Ovary (tissue), 10 donors: ENCODE measurements at regions of chr1 and their contacts with region 1.

Region 1: DNA sequence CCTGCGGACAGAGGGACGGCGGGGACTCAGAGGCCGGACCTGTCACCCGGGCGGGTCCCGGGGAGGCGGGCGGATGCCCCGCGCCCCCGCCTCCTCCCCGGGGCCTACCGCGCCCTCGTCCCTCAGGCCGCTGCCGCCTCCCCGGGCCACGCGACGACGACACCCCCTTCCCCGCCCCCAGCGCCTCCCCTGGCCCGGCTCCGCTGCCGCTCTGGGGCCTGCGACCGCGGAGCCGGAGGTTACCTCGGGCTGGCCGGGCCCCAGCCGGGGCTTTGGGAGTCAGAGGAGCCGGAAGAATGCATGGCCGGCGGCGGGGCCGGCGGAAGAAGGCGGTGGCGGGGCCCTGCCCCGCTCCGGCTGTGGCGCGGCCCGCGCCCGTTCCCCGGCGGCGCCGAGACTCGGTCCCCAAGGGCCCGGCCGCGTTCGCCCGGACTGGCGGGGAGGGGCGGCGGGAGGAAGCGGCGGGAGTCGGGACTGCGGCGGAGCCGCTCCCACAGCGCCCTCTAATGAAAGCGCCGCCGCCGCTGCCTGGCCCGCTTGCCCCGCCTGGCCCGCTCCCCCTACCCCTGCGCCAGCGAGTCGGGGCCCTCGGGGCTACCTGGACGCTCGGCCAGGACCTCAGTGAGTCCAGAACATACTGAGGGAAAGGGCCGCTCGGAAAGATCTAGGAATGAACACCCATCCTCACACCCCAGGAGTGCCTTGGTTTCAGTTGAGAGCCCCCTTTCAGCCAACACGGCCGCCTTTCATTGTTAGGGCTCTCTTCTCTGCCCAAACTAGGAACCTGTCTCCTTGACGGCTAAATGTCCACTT is at the start of gene LPGAT1:
- DNase-seq: peak; percentile 71 to 85 (median 80)
- H3K4me3 ChIP-seq: peak within 1 kb of the TSS; percentile 77
- H3K27ac ChIP-seq: peak within 1 kb of the TSS; percentile 81 to 94
- H3K4me1 ChIP-seq: peaks cover 3% of the 10 kb centered on the region
- H3K27me3 ChIP-seq: no peaks in the 10 kb centered on the region
- CTCF ChIP-seq: peak; percentile 57 to 66 (median 65)
- EP300 ChIP-seq: no peak
- POLR2A ChIP-seq: no peak
- total RNA-seq, gene LPGAT1: 19.8 to 32.7 (median 30.7) TPM

Region 2: DNA sequence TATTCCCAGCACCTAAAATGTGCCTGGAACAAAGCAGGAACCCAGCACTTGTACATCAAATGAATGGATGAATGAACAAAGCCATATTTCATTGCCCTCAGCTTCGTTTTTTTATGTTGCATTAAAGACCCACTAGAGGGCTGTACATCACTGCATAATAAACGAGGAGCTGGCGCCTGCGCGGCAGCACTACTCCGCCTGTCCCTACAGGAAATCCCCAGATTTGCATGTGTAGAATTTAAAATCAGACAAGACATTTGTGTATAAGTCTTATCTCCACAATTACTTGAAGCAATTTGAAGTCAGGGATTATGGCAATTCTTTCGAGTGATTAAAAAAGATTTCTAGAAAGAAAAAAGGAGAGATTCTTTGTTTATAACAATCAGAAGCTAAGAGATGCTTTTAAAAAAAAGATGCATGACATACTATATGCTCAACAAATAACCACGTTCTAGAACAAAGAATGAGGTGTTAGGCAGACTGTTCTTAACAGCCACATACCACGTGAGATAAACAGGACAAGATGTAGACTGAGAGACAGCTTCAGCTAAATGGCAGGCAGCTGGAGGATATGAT is 149.7 kb before region 1 on chr1:
- intact Hi-C with region 1: loop called in 1 of 4 experiments (anchors 10 kb)
- DNase-seq: peak; percentile 50 to 71 (median 63)
- H3K4me3 ChIP-seq: no peak overlapping the region
- H3K27ac ChIP-seq: no peak overlapping the region
- H3K4me1 ChIP-seq: peaks cover 2% of the 10 kb centered on the region
- H3K27me3 ChIP-seq: no peaks in the 10 kb centered on the region
- CTCF ChIP-seq: peak in 2 of 3 donors; percentile 67 to 72
- EP300 ChIP-seq: no peak
- POLR2A ChIP-seq: no peak

Region 3: DNA sequence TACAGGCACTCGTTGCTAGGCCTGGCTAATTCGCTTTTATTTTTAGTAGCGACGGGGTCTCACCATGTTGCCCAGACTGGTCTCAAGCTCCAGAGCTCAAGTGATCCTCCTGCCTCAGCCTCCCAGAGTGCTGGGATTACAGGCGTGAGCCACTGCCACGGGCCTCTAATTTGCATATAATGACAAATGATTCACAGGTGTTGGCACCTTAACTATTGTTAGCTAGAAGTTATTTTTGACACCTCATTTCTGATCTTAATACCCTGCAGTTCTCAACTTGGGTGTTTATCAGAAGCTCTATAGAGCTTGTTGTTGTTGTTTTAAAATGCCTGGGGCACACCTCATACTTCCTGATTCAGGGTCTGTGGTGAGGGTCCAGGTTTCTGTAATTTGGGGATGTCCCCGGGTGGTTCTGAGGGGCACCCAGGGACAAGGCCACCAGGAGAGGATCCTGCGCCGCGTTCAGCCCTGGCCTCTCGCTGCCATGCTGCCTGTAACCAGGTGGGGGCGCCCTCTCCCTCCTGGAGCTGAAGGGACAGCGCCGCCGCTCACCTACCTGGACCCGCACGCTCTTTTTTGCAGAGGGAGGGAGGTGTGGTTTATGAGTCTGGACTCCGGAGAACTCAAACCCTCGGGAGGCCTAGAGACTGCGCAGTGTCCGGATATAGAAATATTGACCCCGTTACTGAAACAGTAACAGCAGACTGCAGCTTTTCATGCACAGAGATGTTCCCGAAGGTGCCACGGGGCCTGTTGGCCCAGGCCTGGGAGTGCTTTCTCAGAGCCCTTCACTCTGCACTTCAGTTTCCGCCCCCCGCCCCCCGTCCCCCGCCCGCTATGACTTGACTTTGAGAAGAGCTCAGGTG is 132.1 kb before region 1 on chr1:
- intact Hi-C with region 1: loop called in 2 of 4 experiments (anchors 10 kb)
- DNase-seq: peak; percentile 38 to 76 (median 54)
- H3K4me3 ChIP-seq: no peak overlapping the region
- H3K27ac ChIP-seq: no peak overlapping the region
- H3K4me1 ChIP-seq: no peaks in the 10 kb centered on the region
- H3K27me3 ChIP-seq: no peaks in the 10 kb centered on the region
- CTCF ChIP-seq: peak in 2 of 3 donors; percentile 32 to 65
- EP300 ChIP-seq: no peak
- POLR2A ChIP-seq: no peak

Region 4: GRCh38 chr1:211705467-211706091 is 125.0 kb before region 1 on chr1:
- intact Hi-C with region 1: loop called in 1 of 4 experiments (anchors 10 kb)
- DNase-seq: no peak
- H3K4me3 ChIP-seq: no peak overlapping the region
- H3K27ac ChIP-seq: no peak overlapping the region
- H3K4me1 ChIP-seq: no peaks in the 10 kb centered on the region
- H3K27me3 ChIP-seq: no peaks in the 10 kb centered on the region
- CTCF ChIP-seq: no peak
- EP300 ChIP-seq: no peak
- POLR2A ChIP-seq: no peak